Right ventricle myocardium inferior (tissue), 1 donor: ENCODE measurements at regions of chr4 and their contacts with region 1.

Region 1: DNA sequence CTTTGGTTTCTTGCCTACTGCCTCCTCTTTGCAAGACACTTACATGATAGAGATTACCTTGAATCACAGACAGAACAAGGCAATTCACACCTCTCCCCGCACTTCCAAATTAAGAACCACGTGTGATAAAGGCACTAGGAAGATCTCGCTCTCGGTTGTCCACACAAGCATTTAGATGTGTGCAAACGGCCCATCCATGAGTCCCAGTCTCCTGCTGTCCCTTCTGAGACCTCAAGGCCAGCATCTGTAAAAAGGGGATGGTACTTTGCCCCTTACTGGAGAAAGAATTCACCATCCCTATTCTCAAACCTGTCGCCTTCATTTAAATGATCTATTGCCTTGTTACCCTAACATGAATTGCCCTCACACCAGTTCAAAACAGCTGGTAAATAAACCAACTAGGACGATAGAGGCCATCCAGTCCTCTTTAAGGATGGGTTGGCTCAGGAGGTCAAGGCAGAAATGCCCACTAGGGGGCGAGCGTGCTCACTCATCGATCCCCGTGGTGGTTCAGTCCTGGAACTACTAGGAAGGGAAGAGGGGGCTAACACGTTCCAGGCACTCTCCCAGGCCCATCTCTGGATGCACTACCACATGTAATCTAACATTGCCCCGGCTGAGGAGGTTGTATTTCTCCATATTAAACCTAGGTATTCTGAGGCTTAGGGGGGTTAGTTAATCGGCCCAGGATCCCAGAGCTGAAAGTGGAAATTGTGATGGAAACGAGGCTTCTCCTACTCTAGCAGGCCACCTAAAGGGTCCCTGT is 95.8 kb downstream of the DHX15 start:
- DNase-seq: peak; percentile 77
- ATAC-seq: peak; percentile 82

Region 2: DNA sequence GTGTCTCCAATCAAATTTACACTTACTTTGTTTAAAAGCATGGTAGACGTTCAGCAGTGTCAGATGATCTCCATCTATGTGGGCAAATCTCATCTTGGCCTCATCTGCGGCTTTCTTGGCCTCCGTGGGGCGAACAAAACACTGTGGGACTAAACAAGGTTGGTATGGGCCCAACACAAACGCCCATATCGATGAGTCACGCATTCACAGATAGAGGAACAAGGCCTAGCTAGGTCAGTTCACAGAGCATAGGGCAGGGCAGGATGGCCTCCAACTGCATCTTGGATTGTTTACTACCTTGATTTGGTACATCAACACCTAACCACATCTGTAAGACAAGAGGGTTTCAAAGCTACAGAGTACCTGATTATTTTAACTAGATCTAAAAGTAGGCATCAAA is 48.4 kb after region 1 on chr4:
- intact Hi-C with region 1: no loop called
- DNase-seq: no peak
- ATAC-seq: no peak

Region 3: GRCh38 chr4:24686871-24687680 is 198.5 kb after region 1 on chr4:
- intact Hi-C with region 1: loop called (anchors 1 kb)
- DNase-seq: no peak
- ATAC-seq: no peak